CD14-positive monocyte (primary cell): ENCODE measurements at regions of chr10 and their contacts with region 1.

Region 1: GRCh38 chr10:23358357-23358756 is 13.8 kb upstream of the C10orf67 start:
- DNase-seq: no peak
- H3K4me3 ChIP-seq: no peak overlapping the region
- H3K4me3 Mint-ChIP-seq: no peak overlapping the region
- H3K27ac ChIP-seq: no peak overlapping the region
- H3K27ac Mint-ChIP-seq: no peak overlapping the region
- H3K4me1 ChIP-seq: no peaks in the 10 kb centered on the region
- H3K4me1 Mint-ChIP-seq: no peaks in the 10 kb centered on the region
- H3K27me3 ChIP-seq: peaks cover 0 to 2% of the 10 kb centered on the region in 2 donors
- H3K27me3 Mint-ChIP-seq: peaks cover 1 to 17% (median 11%) of the 10 kb centered on the region in 3 donors
- CTCF ChIP-seq: no peak

Region 2: DNA sequence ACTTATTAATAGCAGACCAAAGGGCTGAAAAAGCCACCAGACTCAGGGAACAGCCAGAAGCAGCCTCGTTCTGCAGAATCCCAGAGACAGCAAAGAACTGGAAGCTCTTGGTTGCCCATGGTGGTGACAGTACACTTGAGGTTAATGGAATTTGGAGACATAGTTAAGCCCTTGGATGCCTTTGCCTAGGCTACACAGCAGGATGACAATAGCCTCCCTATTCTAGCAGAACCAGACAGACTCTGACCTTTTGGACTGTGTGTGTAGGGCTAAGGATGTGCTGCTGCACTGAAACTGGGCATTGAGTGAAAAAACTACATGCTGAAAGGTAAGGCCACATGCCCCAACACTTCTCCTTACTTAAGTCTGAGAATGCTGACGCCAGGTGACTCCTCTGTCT is 103.2 kb after region 1 on chr10:
- intact Hi-C with region 1: loop called in 1 of 2 experiments (anchors 10 kb)
- DNase-seq: no peak
- H3K4me3 ChIP-seq: no peak overlapping the region
- H3K4me3 Mint-ChIP-seq: no peak overlapping the region
- H3K27ac ChIP-seq: no peak overlapping the region
- H3K27ac Mint-ChIP-seq: no peak overlapping the region
- H3K4me1 ChIP-seq: no peaks in the 10 kb centered on the region
- H3K4me1 Mint-ChIP-seq: no peaks in the 10 kb centered on the region
- H3K27me3 ChIP-seq: peaks cover 0 to 5% of the 10 kb centered on the region in 2 donors
- H3K27me3 Mint-ChIP-seq: peaks cover 5 to 24% (median 11%) of the 10 kb centered on the region in 3 donors
- CTCF ChIP-seq: no peak